Activated naive CD4-positive, alpha-beta T cell treated with anti-CD3 and anti-CD28 coated beads for 36 hours (primary cell): ENCODE measurements at regions of chr14 and their contacts with region 1.

Region 1: DNA sequence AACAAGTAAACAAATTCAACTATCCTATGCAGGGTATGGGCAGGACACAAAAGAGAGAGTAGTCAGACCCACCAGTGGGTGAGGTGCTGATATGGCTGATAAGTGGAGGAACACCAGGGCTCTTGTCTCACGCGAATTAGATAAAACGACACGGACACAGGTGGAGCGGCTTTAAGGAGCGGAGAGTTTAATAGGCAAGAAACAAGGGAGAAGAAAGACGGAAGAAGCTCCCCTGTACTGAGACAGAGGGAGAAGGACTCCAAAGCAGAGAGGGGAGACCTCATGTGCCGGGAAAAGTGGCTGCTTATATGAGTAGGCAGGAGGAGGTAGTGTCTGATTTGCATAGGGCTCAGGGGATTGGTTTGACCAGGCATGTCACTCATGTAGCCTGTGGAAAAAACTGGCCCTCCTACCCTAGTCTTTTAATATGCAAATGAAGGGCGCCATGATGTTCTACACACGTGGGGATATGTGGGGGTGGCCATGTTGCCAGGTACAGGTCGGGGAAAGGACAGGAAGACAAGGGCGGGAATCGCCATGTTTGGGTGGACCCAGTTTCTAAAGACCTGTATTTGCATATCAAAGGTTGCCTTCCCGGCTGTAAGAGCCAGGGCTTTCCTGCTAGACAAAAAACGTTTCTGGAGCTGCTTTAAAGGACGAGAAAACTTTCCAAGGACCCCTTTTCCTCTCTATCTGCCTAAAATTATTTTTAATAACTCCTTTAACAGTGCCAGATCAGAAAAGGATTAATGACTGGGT is 28.8 kb downstream of the RPGRIP1 start:
- DNase-seq: peak; percentile 94
- H3K4me3 Mint-ChIP-seq: peak overlapping the region; percentile 66
- H3K27ac Mint-ChIP-seq: peak overlapping the region; percentile 87
- H3K4me1 Mint-ChIP-seq: peaks cover 23% of the 10 kb centered on the region
- H3K27me3 Mint-ChIP-seq: no peaks in the 10 kb centered on the region

Region 2: GRCh38 chr14:21229821-21230220 is 78.8 kb before region 1 on chr14:
- CTCF ChIA-PET with region 1: no interaction called
- intact Hi-C with region 1: no loop called
- DNase-seq: no peak
- H3K4me3 Mint-ChIP-seq: no peak overlapping the region
- H3K27ac Mint-ChIP-seq: peak overlapping the region; percentile 85
- H3K4me1 Mint-ChIP-seq: peaks cover 79% of the 10 kb centered on the region
- H3K27me3 Mint-ChIP-seq: no peaks in the 10 kb centered on the region

Region 3: DNA sequence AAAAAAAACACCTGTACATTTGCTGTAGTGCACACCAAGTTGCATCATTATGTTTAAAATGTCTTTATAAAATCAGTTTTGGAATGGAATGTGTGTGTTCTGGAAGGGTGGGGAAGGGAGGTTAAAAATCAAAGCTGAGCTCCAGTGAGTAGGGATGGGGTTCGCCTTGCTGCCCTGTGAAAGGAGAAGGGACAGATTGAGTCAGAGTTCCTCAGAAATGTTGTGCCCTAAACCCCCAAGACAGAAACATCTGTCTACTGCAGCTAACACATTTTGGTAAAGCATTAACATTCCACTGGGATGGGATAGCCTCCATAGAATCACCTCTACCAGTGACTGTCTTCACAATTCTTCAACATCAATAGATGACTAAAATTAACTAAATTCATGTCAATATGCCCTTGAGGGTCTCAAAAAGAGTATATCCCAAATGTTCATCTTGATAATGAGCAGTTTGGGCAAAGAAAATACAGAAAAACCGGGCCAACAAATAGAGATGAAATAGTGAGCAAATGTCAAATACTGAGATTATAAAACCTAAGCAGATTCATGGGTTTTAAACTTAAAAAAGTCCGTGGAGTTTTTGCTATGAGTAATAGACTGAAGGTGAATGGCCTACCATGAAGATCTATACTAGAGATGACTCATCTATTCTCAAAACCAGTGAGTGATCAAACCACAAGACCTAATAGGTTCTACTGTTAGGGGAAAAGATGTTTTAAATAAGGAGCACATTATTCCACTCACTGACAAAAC is 44.8 kb before region 1 on chr14:
- CTCF ChIA-PET with region 1: interaction called, 3 read pairs
- intact Hi-C with region 1: loop called (anchors 1 kb)
- DNase-seq: no peak
- H3K4me3 Mint-ChIP-seq: peak overlapping the region; percentile 100
- H3K27ac Mint-ChIP-seq: peak overlapping the region; percentile 100
- H3K4me1 Mint-ChIP-seq: peaks cover 68% of the 10 kb centered on the region
- H3K27me3 Mint-ChIP-seq: no peaks in the 10 kb centered on the region

Region 4: DNA sequence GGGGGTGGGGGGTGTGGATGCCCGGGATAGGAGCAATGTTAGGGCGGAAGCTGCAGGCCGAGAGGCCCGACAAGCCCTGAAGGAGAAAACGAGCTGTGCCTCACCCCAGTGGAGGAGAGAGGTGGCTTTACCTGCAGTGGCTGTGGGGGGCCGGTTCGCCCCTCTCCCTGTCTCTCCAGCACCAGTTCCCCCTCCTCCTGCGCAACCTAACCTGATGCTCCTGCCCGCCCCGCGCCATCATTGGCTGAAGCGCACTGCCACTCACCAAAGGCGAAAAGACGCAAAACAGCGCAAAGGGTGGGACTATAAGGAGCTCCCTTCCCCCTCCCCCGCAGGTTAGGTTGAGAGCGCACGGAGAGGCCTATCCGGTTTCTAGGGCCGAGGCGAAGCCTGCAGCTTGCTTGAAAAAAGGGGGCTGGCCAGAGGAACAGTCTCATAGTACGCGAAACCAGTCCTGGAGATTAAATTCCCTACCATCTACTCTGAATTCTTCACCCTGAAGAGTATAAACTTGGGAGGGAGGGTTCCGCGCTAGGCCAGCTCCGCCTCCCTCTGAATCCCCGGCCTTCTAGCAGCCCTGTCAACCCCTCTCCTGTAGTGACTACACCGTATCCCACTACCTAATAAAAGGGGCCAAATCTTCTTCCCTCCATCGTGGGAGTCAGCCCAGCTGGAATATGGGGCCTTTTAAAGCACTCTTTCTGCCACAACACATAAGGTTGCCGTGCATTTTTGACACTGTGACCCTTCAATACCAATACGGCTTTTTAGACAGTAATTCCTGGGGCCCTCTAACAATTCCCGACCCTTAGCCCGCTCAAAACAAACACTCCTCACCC is 128.6 kb after region 1 on chr14:
- CTCF ChIA-PET with region 1: no interaction called
- intact Hi-C with region 1: loop called (anchors 1 kb)
- DNase-seq: peak; percentile 100
- H3K4me3 Mint-ChIP-seq: peak overlapping the region; percentile 84
- H3K27ac Mint-ChIP-seq: peak overlapping the region; percentile 90
- H3K4me1 Mint-ChIP-seq: peaks cover 52% of the 10 kb centered on the region
- H3K27me3 Mint-ChIP-seq: no peaks in the 10 kb centered on the region

Region 5: DNA sequence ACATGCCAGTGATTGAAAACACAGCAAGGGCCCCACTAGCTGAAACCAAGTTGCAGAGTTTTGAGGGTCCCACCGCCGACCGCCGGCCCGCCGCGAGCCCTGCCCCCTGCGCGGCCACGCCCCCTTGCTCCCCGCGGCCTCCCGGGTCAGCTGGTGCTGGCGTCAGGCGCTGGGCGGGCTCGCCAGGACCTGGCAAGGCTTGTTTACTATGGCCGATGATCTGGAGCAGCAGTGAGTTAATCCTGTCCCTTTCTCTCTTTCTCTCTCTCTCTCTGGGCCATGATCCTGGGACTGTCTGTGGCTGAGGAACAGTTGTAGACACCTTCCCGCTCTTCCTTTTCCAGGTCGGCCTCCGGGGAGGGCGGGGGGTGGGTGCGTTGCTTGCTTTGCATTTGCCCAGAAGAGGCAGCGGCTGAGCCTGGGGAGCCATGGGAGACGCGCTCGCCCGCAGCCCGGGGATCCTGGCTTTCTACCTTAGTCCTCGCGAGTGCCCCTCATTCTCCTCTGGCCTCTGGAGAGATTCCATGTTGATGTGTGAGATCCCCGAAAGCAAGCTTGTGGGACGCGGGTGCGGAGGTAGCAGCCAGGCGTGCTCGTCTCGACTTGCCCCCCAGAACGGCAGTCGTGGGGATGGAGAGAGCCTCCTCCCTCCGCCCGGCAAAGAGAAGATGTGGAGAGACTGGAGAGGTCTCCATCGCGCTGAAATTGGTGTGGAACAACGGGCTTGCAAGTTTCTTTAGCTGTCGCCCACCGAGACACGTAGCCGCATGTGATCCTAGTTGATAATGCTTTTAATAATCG is 1289.6 kb after region 1 on chr14 and contains the start of gene ABHD4:
- CTCF ChIA-PET with region 1: no interaction called
- intact Hi-C with region 1: loop called (anchors 2 kb)
- DNase-seq: peak; percentile 75
- H3K4me3 Mint-ChIP-seq: peak within 1 kb of the TSS; percentile 90
- H3K27ac Mint-ChIP-seq: peak within 1 kb of the TSS; percentile 72
- H3K4me1 Mint-ChIP-seq: peaks cover 28% of the 10 kb centered on the region
- H3K27me3 Mint-ChIP-seq: no peaks in the 10 kb centered on the region
- total RNA-seq, gene ABHD4: 11.1 to 11.9 TPM